ENCODE measurements at regions of chr9 and their contacts with region 1.

Region 1: GRCh38 chr9:105244003-105244733 is at the start of gene SLC44A1:
- DNase-seq: peak; percentile 95
- H3K4me3 Mint-ChIP-seq: peak within 1 kb of the TSS; percentile 83
- H3K27ac Mint-ChIP-seq: peak within 1 kb of the TSS; percentile 76
- H3K4me1 Mint-ChIP-seq: peaks cover 15% of the 10 kb centered on the region
- H3K27me3 Mint-ChIP-seq: peaks cover 14% of the 10 kb centered on the region
- total RNA-seq, gene SLC44A1: 17.6 to 18.6 TPM

Region 2: GRCh38 chr9:104093647-104094533 is 1150.3 kb before region 1 on chr9 and contains the start of gene SMC2:
- CTCF ChIA-PET with region 1: no interaction called
- intact Hi-C with region 1: loop called (anchors 1 kb)
- DNase-seq: peak; percentile 93
- H3K4me3 Mint-ChIP-seq: peak within 1 kb of the TSS; percentile 99
- H3K27ac Mint-ChIP-seq: peak within 1 kb of the TSS; percentile 95
- H3K4me1 Mint-ChIP-seq: peaks cover 35% of the 10 kb centered on the region
- H3K27me3 Mint-ChIP-seq: no peaks in the 10 kb centered on the region
- total RNA-seq, gene SMC2: 62.0 to 63.8 TPM

Region 3: DNA sequence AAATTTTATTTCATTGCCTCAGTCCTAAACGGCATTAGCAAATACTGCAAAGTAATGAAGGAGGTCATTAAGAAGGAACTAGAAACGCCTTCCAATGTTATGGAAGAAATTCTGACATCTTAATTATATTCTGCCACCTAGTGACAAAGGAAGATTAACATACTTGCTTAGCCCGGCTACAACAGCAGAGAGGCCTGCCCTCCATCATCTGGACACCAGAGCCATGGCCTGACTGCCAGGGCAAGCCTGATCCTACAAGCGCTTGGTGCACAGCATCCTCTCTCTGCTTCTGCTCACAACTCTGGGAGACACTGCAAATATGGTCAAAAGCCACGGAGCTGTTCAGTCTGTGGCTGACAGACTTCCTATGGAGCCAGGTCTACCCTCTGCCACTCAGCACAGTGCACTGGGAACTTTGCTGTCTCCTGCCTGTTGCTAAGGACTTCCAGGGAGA is 87.0 kb before region 1 on chr9:
- CTCF ChIA-PET with region 1: no interaction called
- intact Hi-C with region 1: loop called (anchors 1 kb)
- DNase-seq: peak; percentile 46
- H3K4me3 Mint-ChIP-seq: no peak overlapping the region
- H3K27ac Mint-ChIP-seq: no peak overlapping the region
- H3K4me1 Mint-ChIP-seq: peaks cover 16% of the 10 kb centered on the region
- H3K27me3 Mint-ChIP-seq: no peaks in the 10 kb centered on the region

Region 4: GRCh38 chr9:105220451-105220850 is 23.7 kb before region 1 on chr9:
- CTCF ChIA-PET with region 1: no interaction called
- intact Hi-C with region 1: no loop called
- DNase-seq: no peak
- H3K4me3 Mint-ChIP-seq: no peak overlapping the region
- H3K27ac Mint-ChIP-seq: no peak overlapping the region
- H3K4me1 Mint-ChIP-seq: no peaks in the 10 kb centered on the region
- H3K27me3 Mint-ChIP-seq: no peaks in the 10 kb centered on the region

Region 5: GRCh38 chr9:105355781-105356180 is 111.6 kb after region 1 on chr9:
- CTCF ChIA-PET with region 1: no interaction called
- intact Hi-C with region 1: loop called (anchors 5 kb)
- DNase-seq: no peak
- H3K4me3 Mint-ChIP-seq: no peak overlapping the region
- H3K27ac Mint-ChIP-seq: no peak overlapping the region
- H3K4me1 Mint-ChIP-seq: peaks cover 7% of the 10 kb centered on the region
- H3K27me3 Mint-ChIP-seq: no peaks in the 10 kb centered on the region

Region 6: DNA sequence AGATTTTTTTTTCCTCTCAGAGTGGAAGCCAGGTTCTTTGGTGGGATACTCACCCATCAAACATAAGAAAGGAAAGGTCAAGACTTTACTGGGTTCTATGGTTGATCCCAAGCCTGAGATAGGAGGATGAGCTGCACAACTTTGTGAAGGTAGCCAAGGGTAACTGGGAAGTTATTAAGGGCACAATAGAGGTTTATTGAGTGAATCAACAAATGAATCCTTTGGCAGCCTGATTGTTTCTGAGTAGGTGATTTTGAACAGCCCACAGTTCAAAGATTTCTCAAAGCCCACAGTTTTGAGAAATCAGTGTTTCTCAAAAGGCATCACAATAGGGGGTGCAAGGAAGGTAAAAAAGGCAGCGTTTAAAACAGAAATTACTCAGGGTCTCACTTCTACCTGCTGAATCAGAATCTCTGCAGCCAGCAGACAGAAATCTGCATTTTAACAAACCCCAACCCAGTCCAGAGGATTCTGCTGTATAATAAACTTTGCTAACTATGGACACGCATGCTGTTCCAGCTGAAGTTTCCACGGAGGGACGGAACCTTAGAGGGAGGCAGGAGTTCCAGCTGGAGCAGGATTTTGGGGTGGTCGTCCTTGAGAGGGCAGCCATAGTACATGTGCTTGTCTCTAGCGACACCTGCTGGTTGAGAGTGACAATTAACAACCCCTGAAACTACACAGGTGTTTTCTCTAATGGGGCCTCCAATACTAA is 170.9 kb after region 1 on chr9:
- CTCF ChIA-PET with region 1: interaction called, 4 read pairs
- intact Hi-C with region 1: loop called (anchors 1 kb)
- DNase-seq: peak; percentile 72
- H3K4me3 Mint-ChIP-seq: no peak overlapping the region
- H3K27ac Mint-ChIP-seq: no peak overlapping the region
- H3K4me1 Mint-ChIP-seq: peaks cover 2% of the 10 kb centered on the region
- H3K27me3 Mint-ChIP-seq: peaks cover 27% of the 10 kb centered on the region

Region 7: DNA sequence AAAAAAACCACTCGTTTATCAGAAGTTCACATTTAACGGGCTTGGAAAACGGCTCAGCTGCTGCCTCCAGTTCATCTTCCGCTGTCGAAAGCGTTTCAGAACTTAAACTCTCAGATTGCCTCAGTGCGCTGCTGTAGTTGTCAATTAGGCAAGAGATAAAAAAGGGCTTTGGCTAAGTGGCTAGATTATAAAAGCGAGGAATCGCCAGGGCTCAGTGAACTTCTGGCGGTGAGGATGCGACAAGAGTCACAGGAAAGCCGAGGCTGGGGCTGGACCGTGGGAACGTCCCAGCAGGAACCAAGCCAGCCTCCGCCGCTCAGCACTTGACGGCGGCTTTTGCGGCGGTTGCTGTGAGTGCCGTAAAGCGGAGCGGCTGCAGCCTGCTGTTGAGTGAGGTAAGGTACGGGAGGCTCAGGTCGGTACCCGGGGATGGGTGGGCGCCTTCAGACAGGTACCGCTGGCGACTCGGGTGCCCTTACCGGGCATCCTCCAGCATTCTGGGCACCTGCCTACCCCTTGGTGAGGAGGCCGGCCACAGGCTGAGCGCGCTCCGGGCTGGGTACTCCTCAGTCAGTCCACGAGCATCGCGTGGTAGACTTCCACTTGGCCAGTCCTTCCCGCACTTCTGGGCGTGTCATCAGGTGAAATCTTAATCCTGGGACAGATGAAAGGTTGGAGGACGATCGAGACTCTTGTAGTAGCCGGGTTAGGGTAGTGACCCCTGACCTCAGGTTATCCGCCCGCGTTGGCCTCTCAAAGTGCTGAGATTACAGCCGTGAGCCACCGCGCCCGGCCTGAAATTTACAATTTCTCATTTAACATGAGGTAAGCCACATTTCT is 313.8 kb after region 1 on chr9 and contains the start of gene FKTN:
- CTCF ChIA-PET with region 1: no interaction called
- intact Hi-C with region 1: loop called (anchors 2 kb)
- DNase-seq: peak; percentile 88
- H3K4me3 Mint-ChIP-seq: peak within 1 kb of the TSS; percentile 85
- H3K27ac Mint-ChIP-seq: peak within 1 kb of the TSS; percentile 77
- H3K4me1 Mint-ChIP-seq: peaks cover 16% of the 10 kb centered on the region
- H3K27me3 Mint-ChIP-seq: no peaks in the 10 kb centered on the region
- total RNA-seq, gene FKTN: 8.0 to 9.6 TPM